Psoas muscle (tissue), 8 donors: ENCODE measurements at regions of chr9 and their contacts with region 1.

Region 1: GRCh38 chr9:133406480-133407307 is 11.1 kb downstream of the REXO4 start:
- DNase-seq: peak; percentile 74 to 85
- ATAC-seq: peak; percentile 78 to 85 (median 82)
- H3K4me3 ChIP-seq: no peak overlapping the region
- H3K27ac ChIP-seq: peak overlapping the region; percentile 76
- H3K4me1 ChIP-seq: peaks cover 18% of the 10 kb centered on the region
- H3K27me3 ChIP-seq: no peaks in the 10 kb centered on the region
- CTCF ChIP-seq: peak; percentile 83

Region 2: DNA sequence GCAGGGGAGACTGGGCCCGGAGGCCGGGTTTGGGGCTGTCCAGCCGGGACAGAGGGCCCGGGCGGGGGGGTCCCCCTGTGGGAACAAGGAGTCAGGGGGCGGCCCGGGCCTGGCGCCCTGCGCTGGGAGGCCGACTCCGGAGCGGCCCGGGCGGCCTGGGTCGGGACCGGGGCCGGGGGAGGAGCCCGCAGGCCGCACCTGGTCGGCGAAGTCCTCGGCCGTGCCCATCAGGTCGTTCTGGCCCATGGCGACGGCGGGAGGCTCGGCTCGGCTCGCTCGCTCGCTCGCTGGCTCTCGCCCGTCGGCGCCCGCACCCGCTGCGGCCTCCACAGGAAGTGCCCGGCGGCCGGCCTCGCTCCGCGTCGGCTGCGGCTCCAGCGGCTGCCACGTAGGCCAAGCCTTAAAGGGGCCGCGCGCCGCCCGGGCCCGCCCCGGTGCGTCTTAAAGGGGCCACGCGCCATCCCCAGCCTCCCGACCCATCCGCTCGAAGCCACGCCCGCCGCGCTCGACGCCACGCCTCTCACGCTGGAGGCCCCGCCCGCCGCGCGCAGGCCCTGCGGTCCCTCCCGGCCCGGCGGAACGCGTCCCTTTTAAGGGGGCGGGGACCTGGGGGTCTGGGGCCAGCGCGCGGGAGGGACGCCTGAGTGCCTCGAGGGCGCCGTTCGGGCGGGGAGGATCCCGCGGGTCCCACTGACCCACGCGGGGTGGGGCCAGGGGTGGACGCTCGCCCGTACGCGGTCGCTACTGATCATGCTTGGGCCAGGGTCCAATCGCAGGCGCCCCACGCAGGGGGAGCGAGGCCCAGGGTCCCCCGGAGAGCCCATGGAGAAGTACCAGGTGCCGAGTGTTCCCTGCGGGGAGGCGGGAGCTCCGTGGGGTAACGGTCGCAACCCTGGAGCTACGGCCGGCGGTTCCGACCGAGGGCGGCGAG is 30.7 kb before region 1 on chr9 and contains the starts of genes STKLD1 and SURF4:
- intact Hi-C with region 1: loop called in 1 of 2 experiments (anchors 2 kb)
- DNase-seq: peak; percentile 96 to 98
- ATAC-seq: peak; percentile 96 to 98 (median 98)
- H3K4me3 ChIP-seq: peak within 1 kb of the TSS; percentile 100
- H3K27ac ChIP-seq: peak within 1 kb of the TSS; percentile 97
- H3K4me1 ChIP-seq: peaks cover 41% of the 10 kb centered on the region
- H3K27me3 ChIP-seq: no peaks in the 10 kb centered on the region
- CTCF ChIP-seq: no peak
- total RNA-seq, gene STKLD1: 0.28 to 0.69 (median 0.46) TPM
- total RNA-seq, gene SURF4: 45.6 to 69.4 (median 66.8) TPM

Region 3: DNA sequence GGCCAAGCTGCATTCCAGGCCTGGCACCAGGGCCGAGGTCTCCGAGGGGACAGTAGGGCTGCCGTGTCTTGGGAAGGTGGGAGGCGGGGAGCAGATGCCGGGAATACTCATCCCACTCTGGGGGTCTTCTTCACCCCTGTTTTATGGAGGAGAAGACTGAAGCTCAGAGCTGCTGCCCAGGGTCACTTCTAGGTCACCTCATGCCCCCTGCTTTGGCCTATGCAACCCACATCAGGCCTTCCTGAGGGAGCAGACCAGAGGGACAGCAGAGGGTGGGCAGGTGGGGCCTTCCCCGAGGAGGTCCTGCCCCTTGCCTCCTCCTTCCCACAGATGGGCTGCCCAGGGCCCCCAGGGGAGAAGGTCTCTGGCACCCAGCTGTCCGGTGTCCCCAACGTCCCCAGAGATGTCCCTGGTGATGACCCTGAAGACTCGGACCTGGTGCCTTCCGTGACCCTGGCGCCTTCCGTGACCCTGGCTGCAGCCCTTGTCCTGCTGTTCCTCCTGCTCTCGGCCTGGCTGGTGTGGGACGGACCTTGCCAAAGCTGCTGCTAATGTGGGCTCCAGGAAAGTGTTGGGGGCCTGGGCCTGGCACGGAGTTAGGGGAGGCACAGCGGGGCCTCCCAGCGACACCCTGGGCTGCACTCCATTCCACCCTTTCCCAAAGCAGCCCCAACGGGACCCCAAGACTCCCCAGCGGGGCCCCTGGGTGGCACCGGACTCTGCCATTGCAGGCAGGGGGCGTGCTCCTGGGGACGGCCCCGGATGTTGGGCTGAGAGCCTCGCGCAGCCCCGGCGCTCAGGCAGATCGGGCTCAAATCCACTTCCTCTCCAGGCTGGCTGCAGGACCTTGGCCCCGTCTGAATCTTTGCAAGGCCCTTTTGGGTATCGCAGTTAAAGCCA is 78.9 kb after region 1 on chr9:
- intact Hi-C with region 1: loop called (anchors 1 to 5 kb)
- DNase-seq: peak in 1 of 2 donors; percentile 46
- ATAC-seq: peak in 3 of 4 donors; percentile 7 to 23 (median 20)
- H3K4me3 ChIP-seq: no peak overlapping the region
- H3K27ac ChIP-seq: no peak overlapping the region
- H3K4me1 ChIP-seq: no peaks in the 10 kb centered on the region
- H3K27me3 ChIP-seq: peaks cover 0 to 7% (median 0%) of the 10 kb centered on the region in 3 donors
- CTCF ChIP-seq: no peak